Endothelial cell of umbilical vein (primary cell): ENCODE measurements at regions of chr7 and their contacts with region 1.

Region 1: DNA sequence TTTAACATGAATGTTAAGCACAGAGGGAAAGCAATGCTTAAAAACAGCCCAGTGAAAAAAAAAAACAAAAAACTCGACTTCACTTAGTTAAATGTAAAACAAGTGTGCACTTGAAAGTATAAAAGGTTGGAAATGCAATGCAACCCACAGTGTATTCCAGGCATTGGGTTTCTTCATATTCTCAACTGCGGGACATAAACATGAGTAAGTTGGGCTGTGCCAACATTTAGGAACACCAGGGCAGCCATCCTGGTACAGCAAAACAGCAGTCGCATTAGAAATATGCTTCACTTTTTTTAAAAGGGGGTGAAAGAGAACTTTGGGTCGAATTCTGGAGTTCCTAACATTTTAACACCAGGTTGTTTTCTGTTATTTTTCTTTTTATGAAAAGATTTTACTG is 937 bp downstream of the STEAP1 start:
- DNase-seq: peak; percentile 22
- H3K4me3 ChIP-seq: peak overlapping the region; percentile 26 to 77 (median 77)
- H3K27ac ChIP-seq: peak overlapping the region; percentile 53
- H3K4me1 ChIP-seq: peaks cover 37% of the 10 kb centered on the region
- H3K27me3 ChIP-seq: no peaks in the 10 kb centered on the region
- CTCF ChIP-seq: no peak
- POLR2A ChIP-seq: no peak

Region 2: DNA sequence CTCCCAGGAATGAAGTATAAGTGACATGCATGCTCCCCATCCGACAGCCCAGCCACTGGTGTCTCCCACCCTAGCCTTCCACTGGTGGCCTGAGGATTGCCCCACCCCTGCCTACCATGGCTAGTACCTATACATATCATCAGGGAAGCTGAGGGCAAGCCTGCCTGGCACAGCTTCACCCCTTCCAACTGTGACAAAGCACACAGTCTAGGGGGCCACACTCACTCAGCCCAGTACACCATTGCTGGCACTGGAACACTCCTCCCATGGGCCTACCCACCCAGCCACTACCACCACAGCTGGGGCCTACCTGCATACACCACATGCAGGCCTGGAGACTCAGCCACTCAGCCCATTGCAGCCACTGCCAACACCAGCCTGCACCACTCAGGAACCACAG is 394.0 kb before region 1 on chr7:
- CTCF ChIA-PET with region 1: no interaction called
- POLR2A ChIA-PET with region 1: no interaction called
- dilution Hi-C with region 1: no loop called
- intact Hi-C with region 1: no loop called
- DNase-seq: no peak
- H3K4me3 ChIP-seq: no peak overlapping the region
- H3K27ac ChIP-seq: no peak overlapping the region
- H3K4me1 ChIP-seq: no peaks in the 10 kb centered on the region
- H3K27me3 ChIP-seq: no peaks in the 10 kb centered on the region
- CTCF ChIP-seq: no peak
- POLR2A ChIP-seq: no peak

Region 3: GRCh38 chr7:90178679-90179278 is 23.6 kb after region 1 on chr7:
- CTCF ChIA-PET with region 1: interaction called, 5 read pairs
- POLR2A ChIA-PET with region 1: interaction called, 3 read pairs
- dilution Hi-C with region 1: no loop called
- intact Hi-C with region 1: loop called (anchors 1 kb)
- DNase-seq: peak; percentile 85
- H3K4me3 ChIP-seq: peak overlapping the region in 1 of 3 experiments; percentile 5
- H3K27ac ChIP-seq: peak overlapping the region; percentile 93
- H3K4me1 ChIP-seq: peaks cover 36% of the 10 kb centered on the region
- H3K27me3 ChIP-seq: no peaks in the 10 kb centered on the region
- CTCF ChIP-seq: no peak
- POLR2A ChIP-seq: no peak

Region 4: DNA sequence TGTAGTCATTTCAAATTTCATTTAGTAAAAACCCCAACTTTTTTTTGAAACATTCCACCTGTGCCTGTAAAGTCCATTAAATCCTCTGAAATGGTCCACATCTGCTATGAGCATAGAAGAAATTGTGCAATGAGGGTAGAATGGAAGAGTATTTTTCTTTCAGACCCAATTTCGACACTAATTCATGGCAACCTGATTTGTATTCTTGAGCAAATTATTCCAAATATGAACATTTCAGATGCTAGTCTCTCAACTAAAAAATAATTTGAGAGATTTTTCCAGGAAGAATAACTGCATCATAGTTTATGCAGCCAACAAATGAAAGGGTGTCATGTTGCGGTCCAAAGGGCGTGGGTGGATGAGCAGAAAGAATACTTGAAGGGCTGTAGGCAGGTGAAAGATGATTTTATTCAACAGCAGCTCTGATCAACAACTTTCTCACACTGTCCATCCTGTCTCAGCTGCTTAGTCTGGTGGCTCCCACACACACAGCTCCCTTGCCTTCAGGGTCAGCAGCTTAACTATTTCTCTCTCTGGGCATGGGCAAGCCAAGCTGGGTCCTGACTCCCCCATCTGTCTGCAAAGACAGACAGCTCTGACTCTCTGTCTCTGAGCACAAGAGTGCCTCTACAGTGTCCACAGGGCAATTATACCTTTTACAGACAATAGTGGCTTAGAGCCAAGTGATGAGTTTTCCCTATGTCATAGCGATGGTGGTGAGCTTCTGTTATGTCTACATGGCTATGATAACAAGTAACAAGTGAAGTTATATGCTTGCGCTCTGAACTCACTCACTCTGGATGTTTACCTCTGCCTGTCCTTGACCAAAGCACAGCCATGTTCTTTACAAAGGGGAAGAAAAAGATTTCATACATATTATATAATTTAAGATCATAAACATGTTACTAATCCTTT is 67.9 kb after region 1 on chr7:
- CTCF ChIA-PET with region 1: no interaction called
- POLR2A ChIA-PET with region 1: no interaction called
- dilution Hi-C with region 1: no loop called
- intact Hi-C with region 1: no loop called
- DNase-seq: no peak
- H3K4me3 ChIP-seq: no peak overlapping the region
- H3K27ac ChIP-seq: no peak overlapping the region
- H3K4me1 ChIP-seq: no peaks in the 10 kb centered on the region
- H3K27me3 ChIP-seq: no peaks in the 10 kb centered on the region
- CTCF ChIP-seq: no peak
- POLR2A ChIP-seq: no peak

Region 5: DNA sequence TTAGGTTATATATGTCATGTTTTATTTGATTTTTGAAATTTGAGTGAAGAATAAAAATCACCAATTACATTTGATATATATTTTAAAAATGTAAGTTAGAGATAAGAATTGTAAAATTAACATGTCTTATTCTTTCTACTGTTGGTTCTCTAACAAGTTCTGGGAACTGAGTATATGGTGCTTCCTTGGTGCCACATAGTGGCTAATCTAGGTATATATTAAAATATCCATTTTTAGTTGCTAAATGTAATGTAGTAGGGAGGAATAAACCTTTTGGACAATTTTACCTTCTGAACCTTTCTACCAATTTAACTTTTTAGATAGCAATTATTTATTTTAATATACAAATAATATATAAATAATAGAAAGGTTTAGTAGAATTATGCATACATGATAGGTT is 107.2 kb after region 1 on chr7:
- CTCF ChIA-PET with region 1: interaction called, 38 read pairs
- POLR2A ChIA-PET with region 1: no interaction called
- dilution Hi-C with region 1: no loop called
- intact Hi-C with region 1: loop called (anchors 1 kb)
- DNase-seq: peak; percentile 54
- H3K4me3 ChIP-seq: no peak overlapping the region
- H3K27ac ChIP-seq: no peak overlapping the region
- H3K4me1 ChIP-seq: peaks cover 8% of the 10 kb centered on the region
- H3K27me3 ChIP-seq: no peaks in the 10 kb centered on the region
- CTCF ChIP-seq: peak in 1 of 2 donors; percentile 15
- POLR2A ChIP-seq: no peak

Region 6: DNA sequence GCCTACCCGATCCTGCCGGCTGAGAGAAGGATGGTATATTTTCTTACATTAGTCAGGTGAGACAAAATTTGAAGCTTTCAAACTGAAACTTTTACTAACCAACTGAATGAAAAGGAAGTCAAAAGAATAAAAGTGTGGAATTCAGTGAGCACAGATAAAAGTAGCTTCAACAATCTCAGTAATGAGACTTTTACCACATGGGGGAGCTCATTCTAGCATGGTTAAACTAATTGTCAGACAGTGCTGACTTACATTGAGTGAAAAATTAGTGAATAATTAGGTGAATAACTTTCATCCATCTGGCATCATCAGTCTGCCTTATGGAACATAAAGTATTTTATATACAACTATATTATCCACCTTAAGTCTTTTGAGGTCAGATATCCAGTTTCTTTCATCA is 157.5 kb after region 1 on chr7:
- CTCF ChIA-PET with region 1: interaction called, 15 read pairs
- POLR2A ChIA-PET with region 1: no interaction called
- dilution Hi-C with region 1: no loop called
- intact Hi-C with region 1: no loop called
- DNase-seq: peak; percentile 25
- H3K4me3 ChIP-seq: no peak overlapping the region
- H3K27ac ChIP-seq: no peak overlapping the region
- H3K4me1 ChIP-seq: no peaks in the 10 kb centered on the region
- H3K27me3 ChIP-seq: peaks cover 11 to 17% of the 10 kb centered on the region in 2 experiments
- CTCF ChIP-seq: peak; percentile 4 to 23
- POLR2A ChIP-seq: no peak

Region 7: GRCh38 chr7:90629297-90629918 is 474.2 kb after region 1 on chr7:
- CTCF ChIA-PET with region 1: no interaction called
- POLR2A ChIA-PET with region 1: no interaction called
- dilution Hi-C with region 1: no loop called
- intact Hi-C with region 1: loop called (anchors 10 kb)
- DNase-seq: peak; percentile 75
- H3K4me3 ChIP-seq: no peak overlapping the region
- H3K27ac ChIP-seq: no peak overlapping the region
- H3K4me1 ChIP-seq: peaks cover 18% of the 10 kb centered on the region
- H3K27me3 ChIP-seq: no peaks in the 10 kb centered on the region
- CTCF ChIP-seq: peak; percentile 56 to 60
- POLR2A ChIP-seq: no peak